ENCODE measurements at regions of chr7 and their contacts with region 1.

Region 1: GRCh38 chr7:28096713-28097112 is 83.9 kb downstream of the JAZF1 start:
- DNase-seq: peak; percentile 72
- ATAC-seq: peak; percentile 77
- H3K4me3 ChIP-seq: no peak overlapping the region
- H3K27ac ChIP-seq: no peak overlapping the region
- H3K4me1 ChIP-seq: peaks cover 4% of the 10 kb centered on the region
- H3K27me3 ChIP-seq: no peaks in the 10 kb centered on the region
- CTCF ChIP-seq: peak; percentile 87
- POLR2A ChIP-seq: no peak
- RAD21 ChIP-seq: peak; percentile 83

Region 2: GRCh38 chr7:27739909-27740448 is 356.7 kb before region 1 on chr7 and contains the start of gene TAX1BP1:
- CTCF ChIA-PET with region 1: no interaction called
- POLR2A ChIA-PET with region 1: no interaction called
- dilution Hi-C with region 1: no loop called
- in situ Hi-C with region 1: no loop called
- intact Hi-C with region 1: loop called (anchors 10 kb)
- DNase-seq: peak; percentile 94
- ATAC-seq: peak; percentile 95
- H3K4me3 ChIP-seq: peak within 1 kb of the TSS; percentile 86
- H3K27ac ChIP-seq: peak within 1 kb of the TSS; percentile 90
- H3K4me1 ChIP-seq: peaks cover 3% of the 10 kb centered on the region; the same call in 1 of the 2 replicates
- H3K27me3 ChIP-seq: no peaks in the 10 kb centered on the region
- CTCF ChIP-seq: no peak
- POLR2A ChIP-seq: peak; percentile 93
- RAD21 ChIP-seq: no peak
- total RNA-seq, gene TAX1BP1: 52.7 and 68.9 TPM in 2 replicates

Region 3: DNA sequence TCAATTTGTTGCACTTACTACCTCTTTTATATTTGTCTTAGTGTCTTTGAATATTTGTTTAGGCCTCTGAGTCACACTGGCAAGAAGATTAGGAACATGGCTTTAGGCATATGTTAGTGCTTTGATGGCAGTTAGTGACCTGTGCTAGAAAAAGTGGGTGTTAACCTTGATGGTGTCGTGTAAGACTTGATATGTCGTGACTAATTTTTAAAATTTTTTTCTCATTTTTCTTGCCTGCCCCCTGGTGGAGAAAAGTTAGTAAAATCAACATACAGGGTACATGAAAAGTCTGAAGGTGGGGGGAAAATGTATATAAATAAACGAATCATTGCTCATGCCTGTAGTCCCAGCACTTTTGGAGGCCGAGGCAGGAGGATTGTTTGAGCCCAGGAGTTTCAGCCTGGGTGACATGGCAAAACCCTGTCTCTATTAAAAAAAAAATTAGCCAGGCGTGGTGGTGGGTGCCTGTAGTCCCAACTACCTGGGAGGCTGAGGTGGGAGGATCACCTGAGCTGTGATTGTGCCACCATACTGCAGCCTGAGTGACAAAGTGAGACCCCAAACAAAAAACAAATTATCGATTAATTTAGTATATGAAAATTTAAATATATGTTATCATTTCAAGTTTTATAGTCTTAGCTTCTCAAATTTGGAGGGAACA is 312.2 kb before region 1 on chr7:
- CTCF ChIA-PET with region 1: no interaction called
- POLR2A ChIA-PET with region 1: no interaction called
- dilution Hi-C with region 1: no loop called
- in situ Hi-C with region 1: no loop called
- intact Hi-C with region 1: loop called (anchors 5 kb)
- DNase-seq: peak; percentile 70
- ATAC-seq: peak; percentile 66
- H3K4me3 ChIP-seq: no peak overlapping the region
- H3K27ac ChIP-seq: no peak overlapping the region
- H3K4me1 ChIP-seq: no peaks in the 10 kb centered on the region
- H3K27me3 ChIP-seq: no peaks in the 10 kb centered on the region
- CTCF ChIP-seq: peak; percentile 57
- POLR2A ChIP-seq: no peak
- RAD21 ChIP-seq: no peak

Region 4: DNA sequence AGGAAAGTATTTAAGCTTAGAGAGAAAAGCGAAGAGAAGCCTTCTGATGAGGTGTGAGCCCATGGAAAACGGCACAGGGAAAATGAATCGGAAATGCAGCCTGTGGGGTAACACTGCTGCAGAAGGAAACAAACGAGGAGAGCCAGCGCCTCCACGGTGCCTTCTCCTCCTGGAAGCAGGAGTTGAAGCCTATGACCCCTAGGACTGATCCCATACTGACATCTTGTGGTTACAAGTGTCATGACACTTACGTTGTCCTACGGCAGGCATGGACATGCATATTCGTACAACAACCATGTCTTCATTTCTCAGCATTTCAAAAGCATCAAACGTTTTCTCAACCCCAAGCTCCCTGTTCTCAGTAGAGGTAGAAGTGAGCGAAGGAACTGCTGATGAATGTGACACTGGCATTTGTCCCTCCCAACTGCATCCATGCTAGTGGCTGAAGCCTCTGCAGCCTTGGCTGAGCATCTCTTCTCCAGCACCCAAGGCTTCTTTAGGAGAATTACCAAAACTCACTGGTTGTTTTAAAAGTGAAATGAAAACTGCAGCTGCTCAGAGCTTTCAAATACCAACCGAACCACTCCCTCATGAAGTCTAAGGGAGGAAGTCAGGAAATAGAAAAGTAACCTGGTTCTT is 76.3 kb before region 1 on chr7:
- CTCF ChIA-PET with region 1: no interaction called
- POLR2A ChIA-PET with region 1: no interaction called
- dilution Hi-C with region 1: no loop called
- in situ Hi-C with region 1: no loop called
- intact Hi-C with region 1: loop called (anchors 1 kb)
- DNase-seq: peak; percentile 77
- ATAC-seq: peak; percentile 93
- H3K4me3 ChIP-seq: no peak overlapping the region
- H3K27ac ChIP-seq: no peak overlapping the region
- H3K4me1 ChIP-seq: peaks cover 12% of the 10 kb centered on the region
- H3K27me3 ChIP-seq: no peaks in the 10 kb centered on the region
- CTCF ChIP-seq: peak; percentile 87
- POLR2A ChIP-seq: no peak
- RAD21 ChIP-seq: peak; percentile 96

Region 5: DNA sequence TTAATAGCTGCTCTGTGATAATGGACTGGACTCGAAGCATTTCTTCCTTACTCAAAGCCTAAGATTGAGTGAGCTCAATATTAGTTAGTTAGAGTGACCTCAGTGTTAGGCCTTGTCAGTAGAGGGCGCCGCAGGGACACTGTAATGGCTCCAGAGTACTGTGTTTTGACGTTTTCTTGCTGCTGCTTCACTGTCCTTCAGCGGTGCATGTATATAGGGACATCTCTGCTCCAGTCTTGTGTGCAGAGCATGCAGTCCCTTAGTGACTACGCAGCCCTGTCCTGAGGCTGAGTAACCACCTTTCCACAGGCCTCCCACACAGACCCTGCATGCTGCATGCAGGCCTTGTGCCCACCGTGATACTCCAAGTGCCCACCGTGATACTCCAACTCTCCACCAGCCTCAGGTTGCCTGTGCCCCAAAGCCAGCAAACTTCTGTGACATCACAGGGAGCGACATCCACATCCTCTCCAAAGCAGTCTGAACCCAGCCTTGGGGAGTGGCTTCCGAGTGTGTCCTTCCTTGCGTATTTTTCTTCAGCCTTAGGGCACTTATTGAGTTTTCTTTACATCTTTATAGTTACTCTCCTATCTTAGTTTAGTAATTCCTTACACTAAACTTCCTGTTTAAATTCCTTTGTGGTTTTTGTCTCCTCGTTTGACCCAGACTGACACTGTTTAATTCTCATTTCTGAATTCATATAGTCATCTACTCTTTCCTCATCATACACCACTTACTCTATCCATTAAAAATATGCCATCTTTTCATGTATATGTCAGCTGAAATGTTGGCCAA is 34.3 kb before region 1 on chr7:
- CTCF ChIA-PET with region 1: interaction called, 10 read pairs
- POLR2A ChIA-PET with region 1: no interaction called
- dilution Hi-C with region 1: no loop called
- in situ Hi-C with region 1: no loop called
- intact Hi-C with region 1: no loop called
- DNase-seq: peak; percentile 65
- ATAC-seq: peak; percentile 80
- H3K4me3 ChIP-seq: no peak overlapping the region
- H3K27ac ChIP-seq: peak overlapping the region; percentile 82
- H3K4me1 ChIP-seq: peaks cover 20% of the 10 kb centered on the region
- H3K27me3 ChIP-seq: no peaks in the 10 kb centered on the region
- CTCF ChIP-seq: peak; percentile 58
- POLR2A ChIP-seq: no peak
- RAD21 ChIP-seq: peak; percentile 66